Sigmoid colon (tissue), 7 donors: ENCODE measurements at regions of chr14 and their contacts with region 1.

Region 1: GRCh38 chr14:24241829-24242443 is 487 bp downstream of the TINF2 start:
- DNase-seq: peak; percentile 97
- H3K4me3 ChIP-seq: peak overlapping the region; percentile 57 to 81 (median 70)
- H3K27ac ChIP-seq: peak overlapping the region; percentile 95 to 98 (median 97)
- H3K4me1 ChIP-seq: peaks cover 0 to 43% (median 36%) of the 10 kb centered on the region in 4 donors
- H3K27me3 ChIP-seq: no peaks in the 10 kb centered on the region
- CTCF ChIP-seq: peak; percentile 55 to 89 (median 74)
- EP300 ChIP-seq: no peak
- POLR2A ChIP-seq: no peak

Region 2: DNA sequence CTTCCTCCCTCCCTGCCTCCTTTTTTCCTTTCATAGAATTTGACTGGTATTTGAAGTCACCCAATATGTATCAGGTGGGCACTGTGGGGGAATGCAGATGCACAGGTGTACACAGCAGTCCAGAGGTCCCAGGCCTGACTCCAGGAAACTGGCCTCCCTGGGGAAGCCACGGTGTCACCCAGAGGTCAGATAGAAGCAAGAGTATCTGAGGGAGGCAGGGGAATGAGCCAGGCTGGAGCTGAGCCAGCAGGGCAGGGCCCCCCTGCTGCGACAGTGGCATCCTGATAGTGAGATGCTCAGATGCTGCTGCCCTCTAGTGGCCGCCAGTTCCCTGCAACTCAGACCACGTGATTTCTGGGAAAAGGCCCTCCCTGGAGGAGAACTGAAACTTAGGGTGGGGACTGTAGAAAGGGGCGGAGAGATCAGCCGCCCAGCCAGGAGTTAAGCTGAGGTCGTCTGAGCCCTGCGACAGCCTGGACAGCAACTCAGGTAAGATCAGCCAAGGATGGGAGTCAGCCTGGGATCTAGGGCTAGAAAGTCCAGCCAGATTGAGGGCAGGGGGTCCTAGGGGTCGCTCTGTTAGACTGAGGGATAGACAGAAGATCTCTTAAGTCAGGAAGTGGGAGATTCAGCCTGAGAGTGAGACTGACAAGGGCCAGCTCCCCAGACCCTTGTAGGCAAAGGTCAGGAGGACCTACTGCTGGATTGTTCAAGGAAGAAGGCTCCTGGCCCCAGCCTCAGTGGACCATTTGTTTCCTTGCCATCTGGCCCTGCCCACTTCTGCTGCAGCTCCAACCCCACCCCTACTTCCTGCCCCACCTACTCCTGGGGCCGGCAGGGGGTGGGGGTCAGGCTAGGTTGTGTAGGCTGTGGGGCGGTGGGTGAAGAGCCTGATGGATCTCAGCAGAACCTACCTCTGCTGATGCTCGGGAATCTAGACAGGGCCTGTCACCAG is 80.8 kb before region 1 on chr14 and contains the start of gene IRF9:
- intact Hi-C with region 1: no loop called
- DNase-seq: peak; percentile 98
- H3K4me3 ChIP-seq: peak within 1 kb of the TSS; percentile 55 to 77 (median 63)
- H3K27ac ChIP-seq: peak within 1 kb of the TSS; percentile 90 to 97 (median 92)
- H3K4me1 ChIP-seq: peaks cover 0 to 40% (median 28%) of the 10 kb centered on the region in 4 donors
- H3K27me3 ChIP-seq: no peaks in the 10 kb centered on the region
- CTCF ChIP-seq: peak; percentile 91 to 96 (median 94)
- EP300 ChIP-seq: peak in 2 of 4 donors; percentile 34 to 86
- POLR2A ChIP-seq: peak; percentile 25 to 48
- total RNA-seq, gene IRF9: 54.6 to 103 (median 56.1) TPM

Region 3: DNA sequence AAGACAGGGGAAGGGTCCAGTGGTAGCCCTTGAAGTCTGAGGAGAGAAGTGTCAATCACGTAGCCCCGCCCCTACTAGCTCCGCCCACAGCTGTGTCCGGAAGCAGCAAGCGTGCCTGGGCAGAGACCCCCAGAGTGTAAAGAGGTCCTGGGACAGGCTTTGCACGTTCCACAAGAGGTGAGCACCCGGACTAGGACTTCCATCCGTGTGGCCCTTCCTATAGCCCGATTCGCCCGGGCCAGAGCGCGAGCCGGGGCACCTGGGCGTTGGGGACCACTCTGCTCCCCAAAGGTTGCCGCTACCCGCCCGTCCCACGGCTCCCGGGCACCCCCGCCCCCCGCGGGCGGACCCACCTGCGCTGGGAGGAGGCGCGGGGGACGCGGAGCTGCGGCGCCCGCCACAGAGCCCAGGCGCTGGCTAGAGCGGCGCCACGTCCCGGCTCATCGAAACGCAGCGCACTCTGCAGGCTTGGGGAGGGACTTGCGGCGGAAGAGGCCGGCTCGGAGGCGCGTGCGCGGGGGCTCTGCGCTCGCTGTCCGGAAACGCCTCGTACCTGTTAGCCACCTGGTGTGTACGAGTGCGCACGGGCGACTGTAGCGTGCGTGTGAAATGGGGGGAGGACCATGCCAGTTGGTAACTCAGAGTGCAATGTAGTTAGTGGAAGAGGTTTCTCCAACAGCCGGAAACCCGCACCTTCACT is 29.3 kb after region 1 on chr14 and contains the start of gene RABGGTA:
- intact Hi-C with region 1: loop called (anchors 1 kb)
- DNase-seq: peak; percentile 91
- H3K4me3 ChIP-seq: peak within 1 kb of the TSS; percentile 75 to 96 (median 82)
- H3K27ac ChIP-seq: peak within 1 kb of the TSS; percentile 94 to 99 (median 96)
- H3K4me1 ChIP-seq: peaks cover 0 to 10% (median 7%) of the 10 kb centered on the region in 4 donors
- H3K27me3 ChIP-seq: no peaks in the 10 kb centered on the region
- CTCF ChIP-seq: peak; percentile 33 to 78 (median 43)
- EP300 ChIP-seq: no peak
- POLR2A ChIP-seq: peak; percentile 15 to 31
- total RNA-seq, gene RABGGTA: 14.0 to 25.2 (median 20.0) TPM

Region 4: DNA sequence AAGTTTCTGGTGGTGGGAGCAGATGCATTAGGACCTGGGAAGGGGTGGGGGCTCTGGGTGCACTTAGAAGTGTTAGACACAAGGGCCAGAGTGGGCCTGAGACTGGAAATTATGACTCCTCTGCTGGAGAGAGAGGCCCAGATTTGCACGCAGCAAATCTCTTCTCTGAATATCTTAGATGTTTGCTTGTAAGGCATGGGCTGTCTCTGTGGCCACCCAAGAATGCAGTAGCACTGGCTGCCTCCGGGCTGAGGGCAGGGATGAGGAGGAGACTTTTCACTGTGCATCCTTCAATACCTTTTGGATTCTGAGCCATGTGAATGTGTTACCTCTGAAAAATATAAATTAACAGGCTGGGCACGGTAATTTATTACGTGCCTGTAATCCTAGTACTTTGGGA is 43.4 kb after region 1 on chr14:
- intact Hi-C with region 1: no loop called
- DNase-seq: no peak
- H3K4me3 ChIP-seq: no peak overlapping the region
- H3K27ac ChIP-seq: no peak overlapping the region
- H3K4me1 ChIP-seq: no peaks in the 10 kb centered on the region
- H3K27me3 ChIP-seq: no peaks in the 10 kb centered on the region
- CTCF ChIP-seq: no peak
- EP300 ChIP-seq: no peak
- POLR2A ChIP-seq: no peak

Region 5: GRCh38 chr14:24296341-24297157 is 54.6 kb after region 1 on chr14:
- intact Hi-C with region 1: loop called (anchors 1 kb)
- DNase-seq: peak; percentile 73
- H3K4me3 ChIP-seq: no peak overlapping the region
- H3K27ac ChIP-seq: peak overlapping the region in 2 of 4 donors; percentile 22 to 47
- H3K4me1 ChIP-seq: peaks cover 0 to 30% (median 24%) of the 10 kb centered on the region in 4 donors
- H3K27me3 ChIP-seq: no peaks in the 10 kb centered on the region
- CTCF ChIP-seq: peak; percentile 11 to 64 (median 54)
- EP300 ChIP-seq: no peak
- POLR2A ChIP-seq: no peak

Region 6: GRCh38 chr14:24442273-24443052 is 200.5 kb after region 1 on chr14 and contains the start of gene SDR39U1:
- intact Hi-C with region 1: loop called (anchors 5 kb)
- DNase-seq: peak; percentile 99
- H3K4me3 ChIP-seq: peak within 1 kb of the TSS; percentile 66 to 80 (median 70)
- H3K27ac ChIP-seq: peak within 1 kb of the TSS; percentile 95 to 99 (median 98)
- H3K4me1 ChIP-seq: peaks cover 0 to 31% (median 29%) of the 10 kb centered on the region in 4 donors
- H3K27me3 ChIP-seq: no peaks in the 10 kb centered on the region
- CTCF ChIP-seq: no peak
- EP300 ChIP-seq: no peak
- POLR2A ChIP-seq: peak; percentile 76 to 80
- total RNA-seq, gene SDR39U1: 30.3 to 45.4 (median 33.9) TPM